Dorsolateral prefrontal cortex (tissue), 120 donors: ENCODE measurements at regions of chr10 and their contacts with region 1.

Region 1: GRCh38 chr10:113179265-113179664 is 229.2 kb downstream of the TCF7L2 start:
- DNase-seq: peak in 2 of 10 donors; percentile 50 to 54
- H3K4me3 ChIP-seq: no peak overlapping the region
- H3K27ac ChIP-seq: peak overlapping the region in 41 of 59 donors; percentile 29 to 92 (median 83)
- H3K27me3 ChIP-seq: peaks cover 0 to 2% (median 0%) of the 10 kb centered on the region in 45 donors
- CTCF ChIP-seq: no peak

Region 2: DNA sequence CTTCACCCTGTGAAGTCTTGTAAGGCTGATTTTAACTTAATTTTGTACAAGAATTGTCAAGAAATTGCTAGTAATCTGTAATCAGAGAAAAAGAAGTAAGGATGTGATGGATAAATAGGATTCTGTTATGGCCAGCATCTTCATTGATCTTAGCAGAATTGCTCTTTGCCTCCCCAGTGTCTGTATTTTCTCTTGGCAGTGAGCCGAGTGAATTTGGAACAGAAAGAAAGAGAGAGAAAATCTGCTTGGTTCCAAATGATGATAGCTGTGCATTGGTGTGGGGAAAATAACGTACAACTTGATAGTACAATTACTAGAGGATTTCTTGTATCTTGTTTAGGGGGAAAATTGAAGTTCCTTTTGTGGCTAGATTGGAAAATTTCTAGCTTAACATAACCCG is 697.7 kb before region 1 on chr10:
- intact Hi-C with region 1: loop called in 1 of 2 experiments (anchors 5 kb)
- DNase-seq: no peak
- H3K4me3 ChIP-seq: no peak overlapping the region
- H3K27ac ChIP-seq: no peak overlapping the region
- H3K27me3 ChIP-seq: no peaks in the 10 kb centered on the region
- CTCF ChIP-seq: no peak

Region 3: GRCh38 chr10:113148901-113149300 is 30.4 kb before region 1 on chr10:
- intact Hi-C with region 1: loop called in 1 of 2 experiments (anchors 2 kb)
- DNase-seq: peak in 1 of 10 donors; percentile 52
- H3K4me3 ChIP-seq: no peak overlapping the region
- H3K27ac ChIP-seq: peak overlapping the region in 49 of 59 donors; percentile 0 to 83 (median 55)
- H3K27me3 ChIP-seq: no peaks in the 10 kb centered on the region
- CTCF ChIP-seq: no peak